Activated CD4-positive, alpha-beta T cell treated with anti-CD3 and anti-CD28 coated beads, Interleukin-2, amount 10 ng/mL, durations not matched to agents 24 days and 14 days (primary cell): ENCODE measurements at regions of chr10 and their contacts with region 1.

Region 1: DNA sequence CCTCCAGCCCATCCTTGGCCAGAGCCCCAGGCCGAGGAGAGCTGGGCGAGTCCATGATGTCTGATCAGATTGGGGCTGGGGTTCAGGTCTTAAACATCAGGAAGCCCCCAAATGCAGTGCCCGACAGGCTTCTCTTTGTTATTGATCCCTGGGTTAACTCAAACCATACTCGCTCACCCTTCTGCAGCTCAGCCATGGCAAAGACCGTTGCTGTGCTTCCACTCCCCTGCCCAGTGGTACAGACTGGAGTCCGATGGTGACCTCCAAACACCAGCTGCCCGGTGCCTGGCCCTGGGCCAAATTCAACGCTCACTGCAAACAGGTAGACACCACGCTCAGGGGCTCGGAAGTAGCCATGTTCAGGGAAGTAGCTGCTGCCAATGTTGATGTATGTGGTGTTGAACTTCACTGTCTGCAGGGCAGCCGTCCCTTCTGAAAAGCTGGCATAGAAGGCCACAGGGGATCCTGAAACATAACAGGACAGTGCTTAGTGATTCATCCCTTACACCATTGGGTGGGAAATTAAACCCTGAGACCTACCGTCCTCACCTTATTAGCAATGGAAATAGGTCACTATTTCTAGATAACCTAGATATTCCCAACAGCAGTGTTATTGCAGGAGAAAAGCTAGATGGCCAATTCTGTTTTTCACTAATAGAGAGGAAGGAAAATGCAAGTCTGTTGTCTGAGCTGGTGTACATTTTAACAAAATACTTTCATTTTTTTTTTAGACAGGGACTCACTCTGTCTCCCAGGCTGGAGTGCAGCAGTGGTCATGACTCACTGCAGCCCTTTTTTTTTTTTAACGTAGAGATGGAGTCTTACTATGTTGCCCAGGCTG is 20.5 kb downstream of the MMRN2 start:
- DNase-seq: peak; percentile 54
- H3K4me3 Mint-ChIP-seq: no peak overlapping the region
- H3K27ac Mint-ChIP-seq: no peak overlapping the region
- H3K4me1 Mint-ChIP-seq: peaks cover 2% of the 10 kb centered on the region
- H3K27me3 Mint-ChIP-seq: peaks cover 4% of the 10 kb centered on the region

Region 2: DNA sequence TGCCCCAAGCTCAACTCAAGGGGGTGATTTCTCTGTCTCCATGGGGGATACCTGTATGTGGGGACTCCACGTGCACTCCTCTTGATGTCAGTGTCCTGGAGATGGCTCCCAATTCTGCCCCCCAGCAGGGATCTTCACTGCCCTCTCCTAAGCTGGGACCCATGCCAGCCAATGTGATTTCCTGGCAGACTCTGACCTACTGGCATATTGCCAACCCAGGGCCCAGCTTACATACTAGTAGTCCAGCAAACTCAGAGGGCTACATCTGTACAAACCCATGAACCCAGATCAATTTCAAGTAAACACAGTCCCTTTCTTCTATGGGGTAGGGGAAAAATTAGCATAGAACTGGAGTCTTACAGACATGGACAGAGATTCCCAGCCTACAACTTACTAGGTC is 206.7 kb before region 1 on chr10:
- intact Hi-C with region 1: no loop called
- DNase-seq: no peak
- H3K4me3 Mint-ChIP-seq: no peak overlapping the region
- H3K27ac Mint-ChIP-seq: no peak overlapping the region
- H3K4me1 Mint-ChIP-seq: no peaks in the 10 kb centered on the region
- H3K27me3 Mint-ChIP-seq: peaks cover 19% of the 10 kb centered on the region

Region 3: DNA sequence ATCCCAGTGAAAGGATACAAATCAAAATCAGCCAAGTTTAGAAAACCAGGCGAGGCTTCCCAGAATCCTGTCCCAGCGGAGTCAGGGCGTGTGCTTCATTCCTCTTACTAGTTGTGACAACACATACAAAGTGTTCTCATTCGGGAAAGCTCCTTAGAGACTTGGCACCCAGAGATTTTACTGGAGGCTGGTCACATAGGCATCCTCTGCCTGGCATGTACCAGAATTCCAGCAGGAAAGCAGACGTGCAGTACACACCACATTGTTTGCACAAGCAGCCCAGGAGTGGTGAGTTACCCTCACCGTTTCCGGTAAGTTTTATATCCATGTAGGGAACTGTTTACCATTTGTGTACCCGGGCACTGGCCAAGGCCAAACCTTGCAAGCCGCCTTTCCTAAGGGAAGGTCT is 14.3 kb before region 1 on chr10:
- intact Hi-C with region 1: no loop called
- DNase-seq: no peak
- H3K4me3 Mint-ChIP-seq: no peak overlapping the region
- H3K27ac Mint-ChIP-seq: no peak overlapping the region
- H3K4me1 Mint-ChIP-seq: no peaks in the 10 kb centered on the region
- H3K27me3 Mint-ChIP-seq: no peaks in the 10 kb centered on the region

Region 4: GRCh38 chr10:86965986-86966654 is 29.2 kb after region 1 on chr10:
- intact Hi-C with region 1: loop called (anchors 2 kb)
- DNase-seq: no peak
- H3K4me3 Mint-ChIP-seq: peak overlapping the region; percentile 59
- H3K27ac Mint-ChIP-seq: peak overlapping the region; percentile 75
- H3K4me1 Mint-ChIP-seq: peaks cover 18% of the 10 kb centered on the region
- H3K27me3 Mint-ChIP-seq: peaks cover 19% of the 10 kb centered on the region

Region 5: GRCh38 chr10:87105446-87106124 is 168.7 kb after region 1 on chr10:
- intact Hi-C with region 1: no loop called
- DNase-seq: no peak
- H3K4me3 Mint-ChIP-seq: no peak overlapping the region
- H3K27ac Mint-ChIP-seq: no peak overlapping the region
- H3K4me1 Mint-ChIP-seq: no peaks in the 10 kb centered on the region
- H3K27me3 Mint-ChIP-seq: no peaks in the 10 kb centered on the region